Common myeloid progenitor, CD34-positive (primary cell): ENCODE measurements at regions of chr20 and their contacts with region 1.

Region 1: DNA sequence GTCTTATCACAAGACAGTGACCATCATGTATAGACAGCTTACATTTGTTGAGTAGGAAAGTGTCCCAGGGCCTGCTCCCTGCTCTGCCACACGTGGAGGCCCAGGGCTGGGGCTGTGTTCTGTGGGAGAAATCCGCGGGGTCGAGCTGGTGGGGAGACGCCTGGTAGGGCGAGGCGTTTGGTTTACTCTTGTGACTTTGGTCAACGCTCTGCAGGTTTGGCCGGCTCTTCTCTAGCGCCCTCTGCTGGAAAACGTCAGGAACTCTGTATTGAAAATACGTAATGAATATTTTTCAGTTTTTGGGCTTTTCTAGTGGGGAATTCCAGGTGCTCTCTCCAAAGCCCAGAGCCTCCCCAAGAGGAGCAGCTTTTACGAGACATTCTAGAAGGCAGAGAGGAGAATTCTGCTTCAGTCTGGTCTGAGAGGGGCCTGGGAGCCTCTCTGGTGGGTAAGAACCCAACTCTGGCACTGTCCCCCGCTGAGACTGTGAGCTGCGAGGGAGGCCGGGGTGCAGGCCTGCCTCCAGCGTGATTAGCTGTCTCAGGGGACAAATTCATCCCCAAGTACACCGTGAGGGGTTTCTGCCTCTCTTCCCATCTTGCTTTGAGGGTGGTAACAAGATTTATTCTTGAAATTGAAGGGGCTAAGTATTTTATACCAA is 112.6 kb upstream of the RALGAPA2 start:
- DNase-seq: peak; percentile 69 to 79 (median 73)
- H3K4me3 ChIP-seq: no peak overlapping the region
- H3K27ac ChIP-seq: no peak overlapping the region
- H3K4me1 ChIP-seq: peaks cover 0 to 22% (median 15%) of the 10 kb centered on the region in 4 experiments
- H3K27me3 ChIP-seq: peaks cover 0 to 7% (median 2%) of the 10 kb centered on the region in 5 experiments

Region 2: DNA sequence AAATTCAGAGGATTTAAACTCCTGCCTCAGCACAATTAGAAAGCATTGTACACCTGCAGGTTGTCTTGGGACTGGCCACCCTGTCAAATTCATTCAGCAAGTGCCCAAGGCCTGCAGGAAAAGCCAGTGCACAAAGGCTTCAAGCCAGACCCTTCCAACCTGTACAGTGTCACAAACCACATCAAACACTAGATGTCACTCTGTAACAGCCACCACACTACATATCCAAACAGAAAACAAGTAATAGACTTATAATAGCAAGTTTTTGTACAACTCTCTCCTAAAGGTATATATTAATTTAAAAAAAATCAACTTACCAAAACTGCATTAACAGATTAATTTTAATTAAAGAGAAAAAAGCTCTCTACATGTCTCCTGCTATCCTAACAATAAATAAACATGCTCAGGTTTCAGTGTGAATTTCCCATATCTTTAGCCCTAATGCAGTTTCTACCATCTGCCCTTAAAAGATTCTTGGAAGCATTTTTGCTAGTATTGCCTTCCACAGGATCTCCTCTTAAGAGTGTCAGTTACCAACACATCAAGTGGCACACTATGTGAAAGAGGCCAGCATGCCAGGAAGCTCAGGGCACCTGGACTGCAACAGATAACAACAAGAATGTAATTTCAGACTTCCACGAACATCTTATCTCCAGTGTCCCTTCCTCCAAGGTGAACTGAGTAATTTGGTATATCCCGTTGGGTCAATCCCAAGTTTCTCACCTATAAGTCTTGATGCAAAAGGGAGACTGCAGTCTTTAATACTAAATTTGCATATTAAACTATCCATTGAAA is 160.1 kb before region 1 on chr20:
- CTCF ChIA-PET with region 1: interaction called, 148 read pairs
- POLR2A ChIA-PET with region 1: interaction called, 3 read pairs
- DNase-seq: peak; percentile 64 to 76 (median 74)
- H3K4me3 ChIP-seq: no peak overlapping the region
- H3K27ac ChIP-seq: no peak overlapping the region
- H3K4me1 ChIP-seq: peaks cover 12 to 50% (median 25%) of the 10 kb centered on the region in 4 experiments
- H3K27me3 ChIP-seq: no peaks in the 10 kb centered on the region

Region 3: GRCh38 chr20:20731000-20731944 is 93.8 kb before region 1 on chr20:
- CTCF ChIA-PET with region 1: interaction called, 17 read pairs
- POLR2A ChIA-PET with region 1: no interaction called
- DNase-seq: no peak
- H3K4me3 ChIP-seq: no peak overlapping the region
- H3K27ac ChIP-seq: no peak overlapping the region
- H3K4me1 ChIP-seq: peaks cover 23 to 52% (median 37%) of the 10 kb centered on the region in 4 experiments
- H3K27me3 ChIP-seq: no peaks in the 10 kb centered on the region

Region 4: DNA sequence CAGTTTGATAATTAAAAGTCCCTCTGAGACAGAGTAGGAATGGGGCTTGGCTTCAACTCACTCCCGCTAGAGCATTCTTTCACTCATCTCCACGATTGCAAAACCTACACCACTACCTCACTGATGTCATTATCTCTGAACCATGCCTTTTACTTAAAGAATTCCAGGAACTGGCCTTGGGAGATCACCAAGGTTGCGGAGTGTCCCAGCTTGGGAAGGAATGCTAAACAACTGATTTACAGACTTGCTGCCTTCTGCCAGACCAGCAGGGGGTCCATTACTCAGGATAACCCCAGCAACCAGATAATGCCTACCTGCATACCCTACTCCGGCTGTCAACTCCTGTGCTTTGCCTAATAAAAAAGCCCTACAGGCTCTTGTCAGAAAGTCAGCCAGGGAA is 10.4 kb before region 1 on chr20:
- CTCF ChIA-PET with region 1: interaction called, 14 read pairs
- POLR2A ChIA-PET with region 1: no interaction called
- DNase-seq: no peak
- H3K4me3 ChIP-seq: no peak overlapping the region
- H3K27ac ChIP-seq: no peak overlapping the region
- H3K4me1 ChIP-seq: peaks cover 0 to 4% (median 0%) of the 10 kb centered on the region in 4 experiments
- H3K27me3 ChIP-seq: no peaks in the 10 kb centered on the region

Region 5: GRCh38 chr20:20872428-20872827 is 47.4 kb after region 1 on chr20:
- CTCF ChIA-PET with region 1: no interaction called
- POLR2A ChIA-PET with region 1: no interaction called
- DNase-seq: no peak
- H3K4me3 ChIP-seq: no peak overlapping the region
- H3K27ac ChIP-seq: no peak overlapping the region
- H3K4me1 ChIP-seq: no peaks in the 10 kb centered on the region
- H3K27me3 ChIP-seq: peaks cover 0 to 42% (median 22%) of the 10 kb centered on the region in 5 experiments

Region 6: GRCh38 chr20:21004386-21005076 is 179.5 kb after region 1 on chr20:
- CTCF ChIA-PET with region 1: no interaction called
- POLR2A ChIA-PET with region 1: no interaction called
- DNase-seq: no peak
- H3K4me3 ChIP-seq: no peak overlapping the region
- H3K27ac ChIP-seq: no peak overlapping the region
- H3K4me1 ChIP-seq: no peaks in the 10 kb centered on the region
- H3K27me3 ChIP-seq: peaks cover 0 to 13% (median 7%) of the 10 kb centered on the region in 5 experiments